ENCODE measurements at regions of chr2 and their contacts with region 1.

Region 1: GRCh38 chr2:156589381-156590079 is 153.4 kb downstream of the GPD2 start:
- DNase-seq: no peak
- H3K4me3 ChIP-seq: no peak overlapping the region
- H3K27ac ChIP-seq: no peak overlapping the region
- H3K4me1 ChIP-seq: peaks cover 0 to 15% (median 0%) of the 10 kb centered on the region in 3 donors
- H3K27me3 ChIP-seq: no peaks in the 10 kb centered on the region
- CTCF ChIP-seq: peak in 5 of 6 experiments; percentile 27 to 51 (median 43)
- POLR2A ChIP-seq: no peak

Region 2: GRCh38 chr2:155273323-155273722 is 1316.2 kb before region 1 on chr2:
- intact Hi-C with region 1: no loop called
- DNase-seq: no peak
- H3K4me3 ChIP-seq: no peak overlapping the region
- H3K27ac ChIP-seq: no peak overlapping the region
- H3K4me1 ChIP-seq: no peaks in the 10 kb centered on the region
- H3K27me3 ChIP-seq: no peaks in the 10 kb centered on the region
- CTCF ChIP-seq: no peak
- POLR2A ChIP-seq: no peak

Region 3: DNA sequence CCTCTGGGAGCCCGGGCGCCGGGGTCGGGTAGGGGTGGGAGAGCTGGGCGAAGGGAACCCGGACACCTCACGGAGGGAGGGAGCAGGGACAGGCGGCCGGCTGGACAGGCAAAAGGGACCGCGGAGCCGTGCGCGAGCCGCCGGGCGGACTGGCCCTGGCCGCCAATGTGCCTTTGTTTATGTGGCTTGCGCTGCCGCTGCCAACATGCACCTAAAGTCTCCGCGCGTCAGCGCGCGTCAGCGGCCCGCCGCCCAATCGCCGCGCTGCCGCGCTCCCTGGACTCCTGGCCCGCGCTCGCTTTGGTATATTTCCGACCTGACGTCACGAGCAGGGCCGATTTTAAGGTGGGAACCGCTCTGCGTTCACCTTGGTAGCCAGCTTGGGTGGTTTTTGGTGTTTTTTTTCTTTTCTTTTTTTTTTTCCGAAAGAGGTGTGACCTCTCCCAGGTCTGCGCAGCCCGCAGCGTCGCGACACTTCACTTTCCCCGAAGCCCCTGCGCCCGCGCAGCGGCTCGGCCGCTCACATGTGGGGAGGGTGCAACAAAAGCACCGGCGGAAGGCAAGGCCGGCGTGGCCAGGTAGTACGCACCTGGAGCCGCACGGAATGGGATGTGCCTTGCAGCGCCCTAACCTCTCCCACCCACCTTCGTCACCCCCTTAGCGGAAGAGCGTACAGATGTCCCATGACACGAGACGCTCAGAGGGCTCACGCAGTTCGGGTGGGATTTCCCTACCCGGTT is 256.8 kb before region 1 on chr2 and contains the start of gene NR4A2:
- intact Hi-C with region 1: loop called (anchors 5 kb)
- DNase-seq: peak; percentile 52
- H3K4me3 ChIP-seq: peak within 1 kb of the TSS; percentile 63 to 82 (median 80)
- H3K27ac ChIP-seq: peak within 1 kb of the TSS; percentile 94 to 99 (median 96)
- H3K4me1 ChIP-seq: peaks cover 0 to 28% (median 3%) of the 10 kb centered on the region in 3 donors
- H3K27me3 ChIP-seq: peaks cover 0 to 9% (median 0%) of the 10 kb centered on the region in 4 donors
- CTCF ChIP-seq: peak in 1 of 6 experiments; percentile 5
- POLR2A ChIP-seq: peak in 3 of 4 donors; percentile 64 to 94 (median 91)
- total RNA-seq, gene NR4A2: 0.95 to 1.6 (median 1.2) TPM

Region 4: GRCh38 chr2:156748221-156748620 is 158.7 kb after region 1 on chr2:
- intact Hi-C with region 1: no loop called
- DNase-seq: no peak
- H3K4me3 ChIP-seq: no peak overlapping the region
- H3K27ac ChIP-seq: no peak overlapping the region
- H3K4me1 ChIP-seq: no peaks in the 10 kb centered on the region
- H3K27me3 ChIP-seq: no peaks in the 10 kb centered on the region
- CTCF ChIP-seq: no peak
- POLR2A ChIP-seq: no peak